Tibial artery (tissue), 4 donors: ENCODE measurements at regions of chr2 and their contacts with region 1.

Region 1: DNA sequence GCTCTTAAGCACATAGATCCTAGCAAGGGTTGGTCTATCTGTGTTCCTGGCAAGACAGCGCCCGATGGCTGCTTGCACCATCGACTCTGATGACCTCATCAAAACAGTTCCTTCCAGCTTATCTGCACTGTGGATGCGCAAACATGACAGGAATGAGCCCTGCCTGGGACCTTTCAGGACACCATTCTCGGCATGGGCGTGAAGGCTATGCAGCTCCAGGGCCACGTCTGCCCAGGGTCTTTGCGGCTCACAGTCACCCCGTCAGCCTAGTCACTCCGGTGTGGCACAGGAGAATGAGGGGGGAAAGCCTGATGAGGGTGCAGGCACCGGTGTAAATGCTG is 147.8 kb upstream of the TWIST2 start:
- DNase-seq: peak; percentile 67 to 69
- H3K4me3 ChIP-seq: no peak overlapping the region
- H3K27ac ChIP-seq: no peak overlapping the region
- H3K4me1 ChIP-seq: peaks cover 0 to 7% (median 0%) of the 10 kb centered on the region in 4 donors
- H3K27me3 ChIP-seq: no peaks in the 10 kb centered on the region
- CTCF ChIP-seq: no peak

Region 2: GRCh38 chr2:237886685-237887481 is 813.2 kb before region 1 on chr2:
- intact Hi-C with region 1: no loop called
- DNase-seq: peak; percentile 53 to 81
- H3K4me3 ChIP-seq: no peak overlapping the region
- H3K27ac ChIP-seq: peak overlapping the region; percentile 94 to 99
- H3K4me1 ChIP-seq: peaks cover 0 to 73% (median 39%) of the 10 kb centered on the region in 4 donors
- H3K27me3 ChIP-seq: no peaks in the 10 kb centered on the region
- CTCF ChIP-seq: no peak

Region 3: DNA sequence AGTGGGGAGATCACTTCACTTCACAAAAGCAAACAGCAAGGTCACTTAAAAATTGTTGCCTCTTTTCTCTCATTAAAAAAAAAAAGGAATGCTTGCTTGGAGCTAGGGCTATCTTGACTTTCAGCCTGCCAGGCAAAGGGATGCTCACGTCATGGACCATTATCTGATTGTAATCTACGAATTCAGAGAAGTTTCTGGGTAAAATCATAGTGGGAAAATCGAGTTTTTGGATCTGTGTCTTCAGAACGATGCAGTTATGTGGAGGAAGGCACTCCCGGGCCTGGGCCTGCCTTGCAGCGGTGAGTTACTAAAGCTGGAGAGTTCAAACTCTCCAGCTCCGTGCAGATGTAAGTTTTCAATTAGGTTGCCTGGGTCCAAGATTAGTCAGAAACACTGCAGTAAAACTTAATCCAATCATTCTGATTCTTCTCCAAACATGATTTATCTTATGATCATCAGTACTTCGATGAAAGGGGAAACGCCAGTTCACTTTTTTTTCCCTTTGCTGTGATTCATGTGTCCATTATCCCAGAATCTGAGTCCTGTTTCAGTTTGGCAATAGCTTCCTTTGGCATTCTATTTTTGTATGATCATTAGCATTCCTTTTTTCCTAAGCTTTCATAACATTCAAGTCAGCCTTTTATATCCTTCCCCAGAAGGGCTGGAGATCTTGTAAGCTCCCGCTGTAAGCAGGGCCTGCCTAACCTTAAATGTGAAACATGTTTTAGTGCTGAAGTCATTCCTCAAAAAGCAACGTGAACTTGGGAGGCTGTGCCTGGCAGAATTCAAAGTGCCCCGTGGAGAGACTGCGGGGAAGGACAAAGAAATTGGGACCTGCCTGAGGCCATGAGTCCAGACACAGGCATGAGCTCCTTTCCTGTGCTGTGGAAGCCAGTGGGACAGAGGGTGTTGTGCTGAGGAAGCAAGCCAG is 28.5 kb after region 1 on chr2:
- intact Hi-C with region 1: no loop called
- DNase-seq: peak in 1 of 2 donors; percentile 79
- H3K4me3 ChIP-seq: no peak overlapping the region
- H3K27ac ChIP-seq: peak overlapping the region; percentile 75 to 79
- H3K4me1 ChIP-seq: peaks cover 0 to 42% (median 25%) of the 10 kb centered on the region in 4 donors
- H3K27me3 ChIP-seq: no peaks in the 10 kb centered on the region
- CTCF ChIP-seq: no peak

Region 4: DNA sequence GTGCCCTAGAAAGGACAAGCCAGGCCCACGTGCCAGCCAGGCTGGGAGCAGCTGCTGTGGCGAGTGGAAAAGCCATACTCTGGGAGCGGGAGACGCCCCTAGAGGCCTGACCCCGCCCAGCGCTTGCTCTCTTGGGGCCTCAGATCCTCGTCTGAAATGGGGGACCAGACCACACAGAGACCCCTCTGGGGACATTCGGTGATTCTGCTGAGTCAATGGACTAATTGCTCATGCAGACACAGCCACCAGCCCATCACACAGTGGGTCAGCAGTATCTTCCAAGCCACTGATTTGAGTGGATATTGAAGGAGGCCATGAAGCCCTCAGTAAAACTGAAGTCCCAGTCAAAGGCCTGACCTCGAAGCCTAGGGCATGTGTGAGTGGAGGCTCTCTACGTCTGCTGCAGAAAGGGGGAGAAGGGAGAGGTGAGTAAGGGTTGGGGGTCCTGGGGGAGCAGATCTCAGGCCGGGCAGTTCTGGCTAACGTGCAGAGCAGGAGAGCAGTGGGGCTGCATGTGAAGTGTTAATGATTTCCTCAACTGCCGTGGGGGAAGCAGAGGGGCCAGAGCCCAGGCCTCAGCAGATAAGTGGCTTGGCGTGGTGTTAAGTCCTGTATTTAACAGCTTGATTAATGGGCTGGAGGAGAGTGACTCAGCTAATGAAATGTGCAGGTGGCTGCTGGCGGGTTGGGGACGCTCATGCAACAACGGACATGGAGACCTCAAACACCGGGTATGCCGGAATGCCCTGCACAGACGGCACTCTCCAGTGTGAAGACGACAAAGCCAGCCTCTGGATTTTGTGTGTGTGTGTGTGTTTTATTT is 43.4 kb after region 1 on chr2:
- intact Hi-C with region 1: no loop called
- DNase-seq: no peak
- H3K4me3 ChIP-seq: no peak overlapping the region
- H3K27ac ChIP-seq: no peak overlapping the region
- H3K4me1 ChIP-seq: no peaks in the 10 kb centered on the region
- H3K27me3 ChIP-seq: peaks cover 0 to 26% of the 10 kb centered on the region in 2 donors
- CTCF ChIP-seq: no peak

Region 5: DNA sequence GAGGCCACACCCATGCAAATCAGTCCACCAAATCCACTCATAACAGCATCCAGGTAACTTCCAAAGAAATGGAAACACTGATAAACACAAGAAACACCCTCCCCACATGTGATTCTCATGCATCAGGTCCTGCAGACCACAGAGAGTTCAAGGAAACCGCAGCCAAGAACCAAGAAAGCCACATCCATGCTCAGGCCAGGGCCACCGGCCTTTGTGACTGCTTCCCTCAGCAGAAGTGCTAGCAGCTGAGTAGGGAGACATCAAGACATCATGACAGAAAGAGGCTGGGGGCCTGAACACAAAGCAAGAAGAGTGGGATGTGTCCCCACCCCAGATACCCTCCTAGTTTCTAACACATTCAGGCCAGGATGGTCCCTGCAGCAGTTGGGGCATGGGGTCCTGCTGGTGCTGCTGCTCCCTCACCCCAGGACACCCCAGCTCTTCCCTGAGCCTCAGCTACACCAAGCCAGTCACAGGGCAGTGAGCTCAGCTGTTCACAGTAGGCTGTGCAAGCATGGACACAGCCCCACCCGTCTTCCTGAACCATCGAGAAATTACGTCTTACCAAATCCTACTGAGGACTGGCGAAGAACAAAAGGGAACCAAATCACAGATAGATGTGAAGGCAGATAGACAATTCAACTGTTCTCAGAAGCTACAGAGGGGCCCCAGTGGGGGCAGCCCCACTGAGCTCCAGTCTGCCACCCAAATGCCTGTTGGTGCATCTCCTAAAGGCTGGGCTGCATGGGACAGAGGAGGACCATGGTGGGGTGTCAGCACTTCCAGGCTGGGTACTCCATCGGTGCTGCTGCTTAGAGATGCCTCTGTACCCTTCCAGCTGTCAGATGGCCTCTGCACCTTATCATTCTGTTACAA is 639.9 kb after region 1 on chr2:
- intact Hi-C with region 1: no loop called
- DNase-seq: no peak
- H3K4me3 ChIP-seq: no peak overlapping the region
- H3K27ac ChIP-seq: no peak overlapping the region
- H3K4me1 ChIP-seq: no peaks in the 10 kb centered on the region
- H3K27me3 ChIP-seq: no peaks in the 10 kb centered on the region
- CTCF ChIP-seq: no peak

Region 6: GRCh38 chr2:240128608-240129145 is 1428.6 kb after region 1 on chr2:
- intact Hi-C with region 1: loop called (anchors 5 kb)
- DNase-seq: peak; percentile 8 to 43
- H3K4me3 ChIP-seq: no peak overlapping the region
- H3K27ac ChIP-seq: no peak overlapping the region
- H3K4me1 ChIP-seq: no peaks in the 10 kb centered on the region
- H3K27me3 ChIP-seq: no peaks in the 10 kb centered on the region
- CTCF ChIP-seq: no peak